Mammary epithelial cell (primary cell): ENCODE measurements at regions of chr20 and their contacts with region 1.

Region 1: DNA sequence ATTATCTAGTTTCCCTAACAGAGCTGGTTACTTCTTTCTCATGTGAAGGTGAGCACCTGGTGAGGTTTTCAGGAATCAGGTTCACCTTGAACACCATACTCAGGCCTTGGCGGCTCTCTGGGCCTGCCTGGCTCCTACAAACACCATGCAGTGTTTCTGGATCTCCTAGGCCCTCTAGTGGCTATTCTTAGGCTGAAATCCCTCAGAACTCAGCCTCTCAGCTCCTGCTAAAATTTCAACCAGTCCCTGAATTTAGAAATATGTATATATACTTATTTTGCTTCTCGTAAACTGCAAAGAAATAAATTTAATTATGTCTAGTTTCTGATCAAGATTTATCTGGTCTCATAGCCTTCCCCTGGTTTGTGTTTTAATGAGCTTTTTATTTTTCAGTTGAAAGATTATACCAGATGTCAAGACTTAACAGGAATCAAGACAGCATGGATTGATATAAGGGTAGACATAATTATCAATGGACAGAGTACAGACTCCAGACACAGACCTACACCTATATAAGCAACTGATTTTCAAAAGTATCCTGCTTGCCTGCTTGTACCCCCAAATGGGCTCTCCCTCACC is 55.9 kb downstream of the ANKEF1 start:
- DNase-seq: peak; percentile 58
- H3K4me3 ChIP-seq: no peak overlapping the region
- H3K27ac ChIP-seq: no peak overlapping the region
- H3K4me1 ChIP-seq: peaks cover 23% of the 10 kb centered on the region
- H3K27me3 ChIP-seq: no peaks in the 10 kb centered on the region
- CTCF ChIP-seq: peak; percentile 76 to 91

Region 2: GRCh38 chr20:9912858-9913434 is 177.7 kb before region 1 on chr20:
- CTCF ChIA-PET with region 1: no interaction called
- dilution Hi-C with region 1: no loop called
- in situ Hi-C with region 1: no loop called
- intact Hi-C with region 1: loop called (anchors 5 kb)
- DNase-seq: peak; percentile 50
- H3K4me3 ChIP-seq: no peak overlapping the region
- H3K27ac ChIP-seq: no peak overlapping the region
- H3K4me1 ChIP-seq: no peaks in the 10 kb centered on the region
- H3K27me3 ChIP-seq: no peaks in the 10 kb centered on the region
- CTCF ChIP-seq: peak; percentile 80 to 95

Region 3: GRCh38 chr20:10047427-10047826 is 43.2 kb before region 1 on chr20:
- CTCF ChIA-PET with region 1: no interaction called
- dilution Hi-C with region 1: loop called (anchors 5 kb)
- in situ Hi-C with region 1: no loop called
- intact Hi-C with region 1: no loop called
- DNase-seq: no peak
- H3K4me3 ChIP-seq: no peak overlapping the region
- H3K27ac ChIP-seq: no peak overlapping the region
- H3K4me1 ChIP-seq: no peaks in the 10 kb centered on the region
- H3K27me3 ChIP-seq: no peaks in the 10 kb centered on the region
- CTCF ChIP-seq: peak in 1 of 2 donors; percentile 20

Region 4: DNA sequence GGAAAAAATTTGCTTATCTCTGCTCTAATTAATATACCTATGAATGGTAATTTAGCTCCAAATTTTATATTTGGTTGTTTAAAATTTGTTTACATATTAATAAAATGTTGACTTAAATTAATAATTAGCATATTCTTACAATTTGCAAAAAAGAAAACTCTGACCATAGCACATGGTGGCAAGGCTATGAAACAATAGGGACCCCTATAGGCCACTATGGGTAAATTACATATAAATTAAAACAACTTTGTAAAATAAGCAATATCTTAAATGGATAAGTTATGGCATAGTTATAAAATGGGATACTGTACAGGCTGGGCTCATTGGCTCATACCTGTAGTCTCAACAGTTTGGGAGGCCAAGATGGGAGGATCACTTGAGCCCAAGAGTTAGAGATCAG is 267.3 kb after region 1 on chr20:
- CTCF ChIA-PET with region 1: no interaction called
- dilution Hi-C with region 1: no loop called
- in situ Hi-C with region 1: loop called in 1 of 2 experiments (anchors 25 kb)
- intact Hi-C with region 1: loop called (anchors 1 kb)
- DNase-seq: no peak
- H3K4me3 ChIP-seq: no peak overlapping the region
- H3K27ac ChIP-seq: no peak overlapping the region
- H3K4me1 ChIP-seq: no peaks in the 10 kb centered on the region
- H3K27me3 ChIP-seq: no peaks in the 10 kb centered on the region
- CTCF ChIP-seq: peak; percentile 50 to 67

Region 5: DNA sequence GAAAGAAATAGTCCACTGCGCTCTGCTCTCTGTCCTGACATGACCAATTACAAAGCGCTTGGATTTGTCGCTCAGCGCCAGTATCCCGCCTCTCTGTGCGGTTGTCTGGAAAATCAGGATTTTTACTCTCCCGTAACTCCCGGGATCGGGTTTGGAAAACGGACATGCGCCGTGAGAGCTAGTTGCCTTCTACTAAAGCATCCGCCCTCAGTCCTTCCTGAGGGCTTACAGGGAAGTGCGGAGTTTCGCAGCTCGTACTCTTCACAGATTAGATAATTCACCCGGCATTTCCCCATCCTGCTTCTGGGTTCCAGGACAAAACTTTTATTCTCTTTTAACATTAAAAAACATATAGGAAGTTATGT is 343.8 kb after region 1 on chr20:
- CTCF ChIA-PET with region 1: no interaction called
- dilution Hi-C with region 1: no loop called
- in situ Hi-C with region 1: loop called (anchors 10 to 25 kb)
- intact Hi-C with region 1: no loop called
- DNase-seq: peak; percentile 99
- H3K4me3 ChIP-seq: peak overlapping the region; percentile 76 to 92 (median 87)
- H3K27ac ChIP-seq: peak overlapping the region; percentile 89
- H3K4me1 ChIP-seq: peaks cover 21% of the 10 kb centered on the region
- H3K27me3 ChIP-seq: no peaks in the 10 kb centered on the region
- CTCF ChIP-seq: no peak

Region 6: GRCh38 chr20:10636326-10636818 is 545.7 kb after region 1 on chr20:
- CTCF ChIA-PET with region 1: no interaction called
- dilution Hi-C with region 1: no loop called
- in situ Hi-C with region 1: no loop called
- intact Hi-C with region 1: loop called (anchors 10 kb)
- DNase-seq: peak; percentile 31
- H3K4me3 ChIP-seq: no peak overlapping the region
- H3K27ac ChIP-seq: peak overlapping the region; percentile 50
- H3K4me1 ChIP-seq: peaks cover 57% of the 10 kb centered on the region
- H3K27me3 ChIP-seq: no peaks in the 10 kb centered on the region
- CTCF ChIP-seq: peak in 1 of 2 donors; percentile 20